HepG2 (cell line): ENCODE measurements at regions of chr12 and their contacts with region 1.

Region 1: DNA sequence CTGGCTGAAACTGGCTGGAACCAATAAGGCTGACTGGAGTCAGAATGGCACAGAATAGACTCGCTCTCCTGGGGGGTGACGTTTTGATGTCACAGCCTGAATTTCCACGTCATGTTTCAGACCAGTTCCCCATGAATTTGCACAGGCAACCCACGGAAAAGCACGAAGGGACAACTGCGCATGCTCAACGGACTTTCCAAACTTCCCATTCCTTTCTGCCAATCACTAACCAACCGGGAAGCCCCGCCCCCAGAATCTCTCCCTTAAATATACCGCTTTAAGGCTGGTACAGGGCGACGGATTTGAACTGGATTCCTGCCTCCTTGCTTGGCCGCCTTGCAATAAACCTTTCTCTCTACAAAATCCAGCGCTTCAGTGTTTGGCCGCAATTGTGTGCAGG is 434.7 kb downstream of the APAF1 start:
- DNase-seq: no peak
- ATAC-seq: no peak
- H3K4me3 ChIP-seq: no peak overlapping the region
- H3K27ac ChIP-seq: no peak overlapping the region
- H3K4me1 ChIP-seq: no peaks in the 10 kb centered on the region
- H3K27me3 ChIP-seq: no peaks in the 10 kb centered on the region; a peak in 1 of 5 replicates
- CTCF ChIP-seq: no peak
- EP300 ChIP-seq: no peak
- POLR2A ChIP-seq: no peak
- RAD21 ChIP-seq: no peak

Region 2: DNA sequence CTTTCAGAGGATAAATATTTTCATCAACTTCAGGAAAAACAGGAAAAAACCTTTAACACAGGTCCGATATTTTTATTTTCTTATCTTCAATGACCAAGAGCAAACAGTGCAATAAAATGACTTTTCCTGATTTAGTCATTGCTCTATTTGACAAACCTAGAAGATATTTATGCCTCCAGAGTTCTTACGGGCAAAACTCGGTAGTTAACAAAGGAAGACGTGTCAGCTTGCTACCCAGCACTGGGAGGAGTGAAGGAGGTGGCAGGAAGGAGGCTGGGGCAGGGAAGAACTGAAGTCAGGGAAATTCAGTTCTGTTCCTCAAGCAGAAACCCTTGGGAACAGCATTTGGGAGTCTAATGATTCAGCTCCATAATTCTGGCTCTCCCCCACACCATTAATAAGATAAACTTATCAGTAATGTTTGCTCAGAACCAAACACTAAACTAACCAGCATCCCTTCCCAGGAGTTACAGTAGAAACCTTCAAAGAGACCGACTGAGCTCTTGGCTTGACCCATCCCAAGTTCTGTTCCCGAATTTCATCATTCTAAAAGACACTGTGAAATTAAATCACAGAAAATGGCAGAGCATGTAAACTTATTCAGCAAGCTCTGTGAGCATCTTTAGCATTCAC is 271.5 kb before region 1 on chr12:
- CTCF ChIA-PET with region 1: no interaction called
- POLR2A ChIA-PET with region 1: no interaction called
- in situ Hi-C with region 1: no loop called
- intact Hi-C with region 1: loop called (anchors 5 kb)
- DNase-seq: no peak
- ATAC-seq: no peak
- H3K4me3 ChIP-seq: no peak overlapping the region
- H3K27ac ChIP-seq: no peak overlapping the region
- H3K4me1 ChIP-seq: no peaks in the 10 kb centered on the region
- H3K27me3 ChIP-seq: peaks cover 0 to 6% of the 10 kb centered on the region in 2 experiments; a peak in 3 of 5 replicates
- CTCF ChIP-seq: no peak
- EP300 ChIP-seq: no peak
- POLR2A ChIP-seq: no peak
- RAD21 ChIP-seq: no peak